PC-3 (cell line): ENCODE measurements at regions of chr11 and their contacts with region 1.

Region 1: DNA sequence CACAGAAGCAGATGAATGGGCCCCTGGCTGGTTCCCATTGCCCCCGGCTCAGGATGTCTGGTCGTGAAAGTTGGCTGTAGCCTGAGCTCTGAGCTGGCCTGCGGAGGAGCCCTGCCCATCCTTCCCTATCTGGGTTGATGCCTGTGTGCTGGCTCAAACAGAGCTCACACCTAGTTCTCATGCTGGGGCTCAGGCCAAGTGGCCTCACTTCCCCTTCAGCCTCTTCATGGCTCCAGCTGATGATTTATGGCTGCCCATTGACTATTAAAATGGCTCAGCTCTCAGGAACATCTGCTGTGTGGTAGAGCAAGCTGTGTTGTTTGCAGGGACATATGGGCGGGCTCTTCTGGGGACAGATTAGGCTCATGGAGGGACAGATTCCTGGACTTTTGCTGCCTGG is 64.7 kb downstream of the ADAMTS15 start:
- DNase-seq: peak; percentile 38
- ATAC-seq: peak; percentile 43
- H3K4me3 ChIP-seq: no peak overlapping the region
- H3K27ac ChIP-seq: peak overlapping the region; percentile 95
- H3K4me1 ChIP-seq: peaks cover 42% of the 10 kb centered on the region
- H3K27me3 ChIP-seq: no peaks in the 10 kb centered on the region
- CTCF ChIP-seq: no peak

Region 2: DNA sequence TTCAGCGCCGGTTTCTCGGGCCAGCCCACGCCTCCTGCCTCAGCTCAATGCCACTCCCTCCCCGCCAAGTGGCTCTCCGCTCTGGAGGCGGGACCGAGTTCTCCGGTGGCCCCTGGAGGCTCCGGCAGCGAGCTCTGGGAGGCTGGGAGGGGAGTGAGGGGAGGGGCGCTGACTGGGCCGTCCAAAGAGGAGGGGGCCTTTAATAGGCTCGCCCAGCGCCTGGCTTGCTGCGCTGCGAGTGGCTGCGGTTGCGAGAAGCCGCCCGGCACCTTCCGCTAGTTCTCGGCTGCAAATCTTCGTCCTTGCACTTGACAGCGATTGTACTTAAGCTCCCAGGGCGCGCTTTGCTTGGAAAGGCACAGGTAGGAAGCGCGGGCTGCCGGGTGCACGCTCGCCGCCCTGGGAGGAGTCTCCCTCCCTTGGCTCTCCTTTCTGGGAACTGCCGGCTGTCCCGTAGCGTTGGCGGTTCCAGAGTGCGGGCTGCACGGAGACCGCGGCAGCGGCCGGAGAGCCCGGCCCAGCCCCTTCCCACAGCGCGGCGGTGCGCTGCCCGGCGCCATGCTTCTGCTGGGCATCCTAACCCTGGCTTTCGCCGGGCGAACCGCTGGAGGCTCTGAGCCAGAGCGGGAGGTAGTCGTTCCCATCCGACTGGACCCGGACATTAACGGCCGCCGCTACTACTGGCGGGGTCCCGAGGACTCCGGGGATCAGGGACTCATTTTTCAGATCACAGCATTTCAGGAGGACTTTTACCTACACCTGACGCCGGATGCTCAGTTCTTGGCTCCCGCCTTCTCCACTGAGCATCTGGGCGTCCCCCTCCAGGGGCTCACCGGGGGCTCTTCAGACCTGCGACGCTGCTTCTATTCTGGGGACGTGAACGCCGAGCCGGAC is 64.5 kb before region 1 on chr11 and contains the start of gene ADAMTS15:
- CTCF ChIA-PET with region 1: no interaction called
- POLR2A ChIA-PET with region 1: no interaction called
- intact Hi-C with region 1: loop called (anchors 5 kb)
- DNase-seq: peak; percentile 97
- ATAC-seq: peak; percentile 91
- H3K4me3 ChIP-seq: peak within 1 kb of the TSS; percentile 94
- H3K27ac ChIP-seq: peak within 1 kb of the TSS; percentile 52
- H3K4me1 ChIP-seq: peaks cover 34% of the 10 kb centered on the region
- H3K27me3 ChIP-seq: no peaks in the 10 kb centered on the region
- CTCF ChIP-seq: no peak
- total RNA-seq, gene ADAMTS15: 16.8 and 21.7 TPM in 2 replicates

Region 3: DNA sequence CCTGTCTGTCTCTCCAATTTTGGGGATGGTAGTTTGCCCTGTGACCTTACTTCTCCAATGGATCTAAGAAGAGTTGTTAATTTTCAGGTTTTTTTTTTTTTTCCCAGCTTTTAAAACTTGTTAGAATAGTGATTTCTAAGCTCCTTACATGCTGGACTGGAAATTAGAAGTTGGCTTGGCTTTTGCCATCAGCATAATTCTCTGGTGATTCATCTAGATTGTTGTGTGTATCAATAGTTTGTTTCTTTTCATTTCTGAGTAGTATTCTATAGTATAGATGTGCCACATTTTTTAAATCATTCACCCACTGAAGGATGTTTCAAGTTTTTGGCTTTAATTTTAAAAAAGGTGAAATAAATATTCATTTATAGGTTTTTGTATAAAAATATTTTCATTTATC is 13.3 kb before region 1 on chr11:
- CTCF ChIA-PET with region 1: no interaction called
- POLR2A ChIA-PET with region 1: no interaction called
- intact Hi-C with region 1: loop called (anchors 2 kb)
- DNase-seq: no peak
- ATAC-seq: no peak
- H3K4me3 ChIP-seq: no peak overlapping the region
- H3K27ac ChIP-seq: no peak overlapping the region
- H3K4me1 ChIP-seq: peaks cover 13% of the 10 kb centered on the region
- H3K27me3 ChIP-seq: no peaks in the 10 kb centered on the region
- CTCF ChIP-seq: no peak